H1 (cell line): ENCODE measurements at regions of chr12 and their contacts with region 1.

Region 1: GRCh38 chr12:5745265-5745888 is 199.7 kb downstream of the ANO2 start:
- DNase-seq: peak; percentile 70 to 92
- H3K4me3 ChIP-seq: no peak overlapping the region
- H3K27ac ChIP-seq: no peak overlapping the region
- H3K4me1 ChIP-seq: no peaks in the 10 kb centered on the region
- H3K27me3 ChIP-seq: no peaks in the 10 kb centered on the region
- CTCF ChIP-seq: peak; percentile 81 to 93 (median 90)
- EP300 ChIP-seq: no peak
- POLR2A ChIP-seq: no peak
- RAD21 ChIP-seq: peak; percentile 77 to 87

Region 2: GRCh38 chr12:5614256-5614655 is 131.1 kb before region 1 on chr12:
- CTCF ChIA-PET with region 1: no interaction called
- POLR2A ChIA-PET with region 1: no interaction called
- DNase-seq: no peak
- H3K4me3 ChIP-seq: no peak overlapping the region
- H3K27ac ChIP-seq: no peak overlapping the region
- H3K4me1 ChIP-seq: peaks cover 0 to 4% (median 1%) of the 10 kb centered on the region in 4 experiments; a peak in 3 of 7 replicates
- H3K27me3 ChIP-seq: no peaks in the 10 kb centered on the region; a peak in 1 of 7 replicates
- CTCF ChIP-seq: no peak
- EP300 ChIP-seq: no peak
- POLR2A ChIP-seq: no peak
- RAD21 ChIP-seq: no peak

Region 3: DNA sequence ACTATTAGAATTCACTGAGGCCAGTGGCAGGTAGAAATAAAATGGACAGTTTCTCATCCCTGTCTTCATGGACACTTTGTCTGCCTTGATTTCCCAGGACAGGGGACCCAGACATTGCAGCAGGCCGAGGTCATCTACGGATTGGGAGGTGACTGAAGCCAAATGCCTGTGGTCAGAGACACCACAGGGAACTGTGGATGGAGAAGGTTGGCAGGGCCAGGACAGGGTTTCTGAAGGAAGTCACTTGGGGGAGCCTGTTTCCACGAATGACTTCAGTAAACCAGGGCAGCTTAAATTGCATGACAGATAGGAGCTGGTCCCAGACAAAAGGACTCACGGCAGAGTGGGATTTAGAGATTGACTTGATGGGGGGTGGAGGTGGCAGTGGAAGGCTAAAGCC is 88.5 kb before region 1 on chr12:
- CTCF ChIA-PET with region 1: no interaction called
- POLR2A ChIA-PET with region 1: no interaction called
- DNase-seq: no peak
- H3K4me3 ChIP-seq: no peak overlapping the region
- H3K27ac ChIP-seq: no peak overlapping the region
- H3K4me1 ChIP-seq: no peaks in the 10 kb centered on the region
- H3K27me3 ChIP-seq: no peaks in the 10 kb centered on the region
- CTCF ChIP-seq: no peak
- EP300 ChIP-seq: no peak
- POLR2A ChIP-seq: no peak
- RAD21 ChIP-seq: no peak

Region 4: GRCh38 chr12:5733136-5733755 is 12.1 kb before region 1 on chr12:
- CTCF ChIA-PET with region 1: interaction called, 45 read pairs
- POLR2A ChIA-PET with region 1: no interaction called
- DNase-seq: no peak
- H3K4me3 ChIP-seq: no peak overlapping the region
- H3K27ac ChIP-seq: no peak overlapping the region
- H3K4me1 ChIP-seq: no peaks in the 10 kb centered on the region
- H3K27me3 ChIP-seq: peaks cover 0 to 1% (median 0%) of the 10 kb centered on the region in 4 experiments; a peak in 1 of 7 replicates
- CTCF ChIP-seq: no peak
- EP300 ChIP-seq: no peak
- POLR2A ChIP-seq: no peak
- RAD21 ChIP-seq: no peak

Region 5: GRCh38 chr12:5768581-5769196 is 23.3 kb after region 1 on chr12:
- CTCF ChIA-PET with region 1: interaction called, 22 read pairs
- POLR2A ChIA-PET with region 1: no interaction called
- DNase-seq: no peak
- H3K4me3 ChIP-seq: no peak overlapping the region
- H3K27ac ChIP-seq: no peak overlapping the region
- H3K4me1 ChIP-seq: no peaks in the 10 kb centered on the region
- H3K27me3 ChIP-seq: no peaks in the 10 kb centered on the region
- CTCF ChIP-seq: no peak
- EP300 ChIP-seq: no peak
- POLR2A ChIP-seq: no peak
- RAD21 ChIP-seq: no peak

Region 6: DNA sequence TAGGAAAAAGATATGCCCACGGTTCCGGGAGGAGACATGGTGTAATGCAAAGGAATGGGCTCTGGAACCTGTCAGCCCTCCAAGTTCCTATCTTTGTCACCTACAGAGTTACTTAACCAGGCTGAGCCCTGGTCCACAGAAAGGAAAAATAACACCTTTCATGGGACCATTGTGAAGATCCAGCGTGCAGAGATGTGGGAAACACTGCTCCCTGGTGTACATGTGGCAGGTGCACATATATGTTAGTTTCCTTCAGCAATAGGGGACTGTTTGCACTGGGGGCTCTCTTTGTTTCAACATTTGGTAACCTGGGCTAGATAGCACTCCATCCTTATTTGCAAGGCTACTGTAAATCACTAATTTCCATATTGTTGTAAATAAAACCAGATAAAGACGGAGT is 127.4 kb after region 1 on chr12:
- CTCF ChIA-PET with region 1: interaction called, 18 read pairs
- POLR2A ChIA-PET with region 1: no interaction called
- DNase-seq: no peak
- H3K4me3 ChIP-seq: no peak overlapping the region
- H3K27ac ChIP-seq: no peak overlapping the region
- H3K4me1 ChIP-seq: peaks cover 0 to 15% (median 4%) of the 10 kb centered on the region in 4 experiments; a peak in 5 of 7 replicates
- H3K27me3 ChIP-seq: no peaks in the 10 kb centered on the region
- CTCF ChIP-seq: peak; percentile 17 to 45 (median 17); a peak in 3 of 4 replicates
- EP300 ChIP-seq: no peak
- POLR2A ChIP-seq: no peak
- RAD21 ChIP-seq: peak; percentile 53 to 58

Region 7: GRCh38 chr12:6030081-6030480 is 284.7 kb after region 1 on chr12:
- CTCF ChIA-PET with region 1: no interaction called
- POLR2A ChIA-PET with region 1: no interaction called
- DNase-seq: no peak
- H3K4me3 ChIP-seq: no peak overlapping the region
- H3K27ac ChIP-seq: no peak overlapping the region
- H3K4me1 ChIP-seq: no peaks in the 10 kb centered on the region
- H3K27me3 ChIP-seq: no peaks in the 10 kb centered on the region
- CTCF ChIP-seq: no peak
- EP300 ChIP-seq: no peak
- POLR2A ChIP-seq: no peak
- RAD21 ChIP-seq: no peak